CD4-positive, alpha-beta T cell (primary cell): ENCODE measurements at regions of chr5 and their contacts with region 1.

Region 1: DNA sequence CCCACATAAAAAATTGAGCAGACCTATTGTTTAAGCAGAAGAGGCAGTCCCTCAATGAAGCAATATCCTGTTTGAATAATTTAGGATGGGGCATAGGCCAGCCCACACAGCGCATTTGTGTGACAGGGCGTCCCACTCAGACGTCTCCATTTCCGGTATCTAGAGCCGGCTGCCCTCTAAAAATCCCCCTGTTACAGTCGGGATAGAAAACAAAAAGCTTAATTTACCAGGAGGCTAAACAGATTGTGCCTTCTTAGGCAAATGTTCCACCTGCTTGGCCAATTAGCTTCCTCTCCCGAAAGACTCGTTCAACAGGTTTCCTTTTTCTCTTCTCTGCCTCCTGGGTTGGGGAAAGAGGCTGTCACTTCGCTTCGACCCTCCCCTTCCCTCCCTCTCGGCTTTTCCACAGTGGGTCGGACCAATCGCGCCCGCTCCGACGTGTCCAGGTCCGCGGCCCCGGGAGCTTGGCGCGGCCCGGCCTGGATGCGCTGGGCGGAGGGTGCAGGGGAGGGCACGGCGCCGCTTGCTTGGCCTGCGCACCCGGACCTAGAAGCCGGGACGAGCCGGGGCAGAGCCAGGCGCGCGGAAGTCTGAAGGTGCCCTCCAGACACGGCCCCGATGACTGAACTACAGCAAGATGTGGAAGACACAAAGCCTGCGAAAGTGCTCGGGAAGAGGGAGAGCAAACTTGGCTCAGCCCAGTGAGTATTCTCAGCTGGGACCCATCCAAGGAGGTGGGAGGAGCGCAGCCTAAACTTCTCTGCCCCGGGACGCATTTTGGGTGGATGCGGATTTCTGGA is at the start of gene GRAMD2B:
- DNase-seq: peak; percentile 38 to 88 (median 57)
- ATAC-seq: peak; percentile 95
- H3K4me3 ChIP-seq: peak within 1 kb of the TSS; percentile 72
- H3K4me3 Mint-ChIP-seq: peak within 1 kb of the TSS; percentile 99
- H3K27ac ChIP-seq: peak within 1 kb of the TSS; percentile 81 to 82
- H3K27ac Mint-ChIP-seq: peak within 1 kb of the TSS; percentile 93
- H3K4me1 ChIP-seq: peaks cover 10% of the 10 kb centered on the region
- H3K4me1 Mint-ChIP-seq: peaks cover 48% of the 10 kb centered on the region
- H3K27me3 ChIP-seq: no peaks in the 10 kb centered on the region
- H3K27me3 Mint-ChIP-seq: no peaks in the 10 kb centered on the region
- CTCF ChIP-seq: no peak
- total RNA-seq, gene GRAMD2B: 7.2 to 9.4 TPM

Region 2: DNA sequence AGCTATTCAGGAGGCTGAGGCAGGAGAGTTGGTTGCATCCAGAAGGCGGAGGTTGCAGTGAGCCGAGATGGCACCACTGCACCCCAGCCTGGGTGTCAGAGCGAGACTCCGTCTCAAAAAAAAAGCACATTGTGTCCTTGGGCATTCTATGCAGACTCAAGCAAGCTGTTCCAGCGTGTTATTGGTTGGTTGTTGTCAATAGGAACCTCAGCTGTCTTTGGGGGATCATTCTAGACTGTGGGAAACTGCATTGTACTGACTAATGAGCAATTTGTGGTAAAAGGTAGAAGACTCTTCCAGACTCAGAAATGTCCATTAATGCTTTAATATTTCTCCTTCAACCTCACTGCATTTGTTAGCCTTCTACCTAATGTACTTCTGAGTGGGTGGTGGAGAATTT is 379.5 kb before region 1 on chr5:
- CTCF ChIA-PET with region 1: no interaction called
- POLR2A ChIA-PET with region 1: no interaction called
- intact Hi-C with region 1: no loop called
- DNase-seq: no peak
- ATAC-seq: no peak
- H3K4me3 ChIP-seq: no peak overlapping the region
- H3K4me3 Mint-ChIP-seq: no peak overlapping the region
- H3K27ac ChIP-seq: no peak overlapping the region
- H3K27ac Mint-ChIP-seq: no peak overlapping the region
- H3K4me1 ChIP-seq: no peaks in the 10 kb centered on the region
- H3K4me1 Mint-ChIP-seq: no peaks in the 10 kb centered on the region
- H3K27me3 ChIP-seq: no peaks in the 10 kb centered on the region
- H3K27me3 Mint-ChIP-seq: no peaks in the 10 kb centered on the region
- CTCF ChIP-seq: no peak

Region 3: DNA sequence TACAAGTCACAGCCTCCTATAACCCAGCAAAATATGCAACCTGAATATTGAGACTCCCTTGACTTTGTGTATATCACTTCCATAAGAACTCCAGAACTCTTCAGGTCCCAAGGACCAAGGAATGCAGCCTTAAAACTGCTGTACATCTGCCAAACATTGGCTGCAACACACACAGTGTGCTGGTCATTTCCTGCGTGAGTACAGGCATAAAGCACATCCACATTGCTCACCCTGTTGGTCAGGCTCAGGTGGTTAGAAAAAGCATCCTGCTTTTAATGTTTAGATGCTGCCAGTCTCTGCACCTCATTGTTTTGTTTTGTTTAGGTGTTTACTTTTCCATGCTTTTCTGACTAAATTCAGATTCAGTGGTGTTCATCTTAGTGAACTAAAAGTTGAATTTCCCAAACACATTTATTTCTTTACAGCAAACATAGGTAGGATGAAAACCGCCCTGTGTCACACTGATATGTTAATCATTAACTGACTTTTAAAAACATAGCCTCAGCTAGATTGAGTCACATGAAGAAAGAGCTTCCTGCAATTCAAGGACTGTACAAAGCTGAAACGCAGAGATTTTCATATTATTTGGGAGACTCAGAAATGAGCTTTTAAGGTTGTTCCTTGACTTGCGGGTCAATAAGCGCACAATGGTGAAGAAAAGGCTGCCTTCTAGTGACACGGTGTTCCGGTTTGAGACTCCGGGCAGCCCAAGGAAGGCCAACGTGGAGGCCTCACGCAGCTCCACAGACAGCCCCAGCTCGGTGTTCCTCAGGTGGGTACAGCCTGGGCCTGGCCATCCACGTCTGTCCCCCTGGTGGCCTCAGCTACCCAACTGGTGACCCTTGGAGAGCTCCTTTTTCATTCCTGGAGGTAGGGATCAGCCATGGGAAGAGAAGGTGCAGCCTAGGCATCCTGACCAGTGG is 52.1 kb before region 1 on chr5:
- CTCF ChIA-PET with region 1: no interaction called
- POLR2A ChIA-PET with region 1: no interaction called
- intact Hi-C with region 1: loop called in 1 of 2 experiments (anchors 10 kb)
- DNase-seq: no peak
- ATAC-seq: no peak
- H3K4me3 ChIP-seq: no peak overlapping the region
- H3K4me3 Mint-ChIP-seq: no peak overlapping the region
- H3K27ac ChIP-seq: no peak overlapping the region
- H3K27ac Mint-ChIP-seq: no peak overlapping the region
- H3K4me1 ChIP-seq: peaks cover 6% of the 10 kb centered on the region
- H3K4me1 Mint-ChIP-seq: peaks cover 17% of the 10 kb centered on the region
- H3K27me3 ChIP-seq: no peaks in the 10 kb centered on the region
- H3K27me3 Mint-ChIP-seq: no peaks in the 10 kb centered on the region
- CTCF ChIP-seq: no peak

Region 4: DNA sequence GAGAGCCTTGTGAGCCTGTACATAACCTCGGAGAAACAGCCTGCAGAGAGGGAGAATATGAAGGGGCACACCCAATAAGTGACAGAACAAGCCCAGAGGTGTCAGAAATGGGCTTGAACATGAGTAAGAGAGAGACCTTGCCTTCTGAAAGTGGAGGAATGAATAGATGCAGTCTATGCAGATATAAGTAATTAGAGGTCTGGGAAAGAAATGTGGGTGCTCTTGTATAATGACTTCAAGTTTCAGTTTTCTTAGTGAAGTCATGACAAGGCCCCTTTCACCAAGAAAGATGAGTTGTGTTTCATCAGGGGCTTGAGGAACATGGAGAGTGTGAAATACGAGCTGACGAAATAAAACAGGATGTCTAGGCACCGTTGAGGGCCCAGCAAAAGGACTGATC is 15.1 kb after region 1 on chr5:
- CTCF ChIA-PET with region 1: no interaction called
- POLR2A ChIA-PET with region 1: interaction called, 17 read pairs
- intact Hi-C with region 1: no loop called
- DNase-seq: peak in 1 of 14 experiments; percentile 28
- ATAC-seq: no peak
- H3K4me3 ChIP-seq: no peak overlapping the region
- H3K4me3 Mint-ChIP-seq: no peak overlapping the region
- H3K27ac ChIP-seq: no peak overlapping the region
- H3K27ac Mint-ChIP-seq: no peak overlapping the region
- H3K4me1 ChIP-seq: peaks cover under 1% of the 10 kb centered on the region
- H3K4me1 Mint-ChIP-seq: peaks cover 11% of the 10 kb centered on the region
- H3K27me3 ChIP-seq: no peaks in the 10 kb centered on the region
- H3K27me3 Mint-ChIP-seq: no peaks in the 10 kb centered on the region
- CTCF ChIP-seq: no peak

Region 5: GRCh38 chr5:126449751-126450271 is 26.6 kb after region 1 on chr5:
- CTCF ChIA-PET with region 1: interaction called, 3 read pairs
- POLR2A ChIA-PET with region 1: interaction called, 72 read pairs
- intact Hi-C with region 1: loop called (anchors 1 to 2 kb)
- DNase-seq: peak in 13 of 14 experiments; percentile 20 to 90 (median 53)
- ATAC-seq: peak; percentile 77
- H3K4me3 ChIP-seq: peak overlapping the region; percentile 57
- H3K4me3 Mint-ChIP-seq: peak overlapping the region; percentile 91
- H3K27ac ChIP-seq: peak overlapping the region; percentile 84 to 96
- H3K27ac Mint-ChIP-seq: peak overlapping the region; percentile 97
- H3K4me1 ChIP-seq: peaks cover 53% of the 10 kb centered on the region
- H3K4me1 Mint-ChIP-seq: peaks cover 71% of the 10 kb centered on the region
- H3K27me3 ChIP-seq: no peaks in the 10 kb centered on the region
- H3K27me3 Mint-ChIP-seq: no peaks in the 10 kb centered on the region
- CTCF ChIP-seq: no peak

Region 6: GRCh38 chr5:126462239-126463014 is 39.2 kb after region 1 on chr5:
- CTCF ChIA-PET with region 1: no interaction called
- POLR2A ChIA-PET with region 1: interaction called, 9 read pairs
- intact Hi-C with region 1: loop called in 1 of 2 experiments (anchors 5 kb)
- DNase-seq: no peak
- ATAC-seq: no peak
- H3K4me3 ChIP-seq: no peak overlapping the region
- H3K4me3 Mint-ChIP-seq: no peak overlapping the region
- H3K27ac ChIP-seq: no peak overlapping the region
- H3K27ac Mint-ChIP-seq: peak overlapping the region; percentile 35
- H3K4me1 ChIP-seq: no peaks in the 10 kb centered on the region
- H3K4me1 Mint-ChIP-seq: peaks cover 28% of the 10 kb centered on the region
- H3K27me3 ChIP-seq: no peaks in the 10 kb centered on the region
- H3K27me3 Mint-ChIP-seq: no peaks in the 10 kb centered on the region
- CTCF ChIP-seq: no peak

Region 7: DNA sequence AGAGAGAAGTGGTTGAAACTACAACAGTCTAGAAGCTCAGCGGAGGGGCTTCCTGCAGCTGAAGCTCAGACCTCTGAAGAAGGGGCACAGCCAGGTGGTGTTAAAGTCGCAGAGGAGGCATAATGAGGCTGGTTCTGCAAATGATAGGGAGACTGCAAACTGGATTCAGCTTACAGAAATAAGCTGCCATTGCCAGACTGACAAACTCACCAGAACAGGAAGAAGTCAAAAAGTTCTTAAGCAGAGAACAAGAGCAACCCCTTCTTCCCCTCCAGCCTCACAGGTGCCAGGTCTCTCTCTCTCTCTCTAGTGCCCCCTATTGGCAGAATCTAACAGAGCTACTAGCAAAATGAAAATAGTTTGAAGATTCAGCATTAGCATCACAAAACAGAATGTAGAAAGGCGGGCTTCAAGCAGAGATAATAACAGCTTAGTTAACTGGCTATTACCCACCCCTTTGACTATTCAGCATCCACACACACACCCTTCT is 76.7 kb after region 1 on chr5:
- CTCF ChIA-PET with region 1: no interaction called
- POLR2A ChIA-PET with region 1: interaction called, 14 read pairs
- intact Hi-C with region 1: loop called (anchors 2 to 5 kb)
- DNase-seq: peak in 8 of 14 experiments; percentile 8 to 77 (median 36)
- ATAC-seq: peak; percentile 79
- H3K4me3 ChIP-seq: no peak overlapping the region
- H3K4me3 Mint-ChIP-seq: peak overlapping the region; percentile 11
- H3K27ac ChIP-seq: no peak overlapping the region
- H3K27ac Mint-ChIP-seq: peak overlapping the region; percentile 82
- H3K4me1 ChIP-seq: peaks cover 10% of the 10 kb centered on the region
- H3K4me1 Mint-ChIP-seq: peaks cover 45% of the 10 kb centered on the region
- H3K27me3 ChIP-seq: no peaks in the 10 kb centered on the region
- H3K27me3 Mint-ChIP-seq: no peaks in the 10 kb centered on the region
- CTCF ChIP-seq: peak; percentile 68

Region 8: GRCh38 chr5:126508962-126509279 is 85.7 kb after region 1 on chr5:
- CTCF ChIA-PET with region 1: no interaction called
- POLR2A ChIA-PET with region 1: interaction called, 11 read pairs
- intact Hi-C with region 1: no loop called
- DNase-seq: peak in 4 of 14 experiments; percentile 28 to 64 (median 55)
- ATAC-seq: peak; percentile 90
- H3K4me3 ChIP-seq: peak overlapping the region; percentile 29
- H3K4me3 Mint-ChIP-seq: peak overlapping the region; percentile 85
- H3K27ac ChIP-seq: peak overlapping the region in 1 of 2 donors; percentile 11
- H3K27ac Mint-ChIP-seq: peak overlapping the region; percentile 92
- H3K4me1 ChIP-seq: peaks cover 23% of the 10 kb centered on the region
- H3K4me1 Mint-ChIP-seq: peaks cover 50% of the 10 kb centered on the region
- H3K27me3 ChIP-seq: no peaks in the 10 kb centered on the region
- H3K27me3 Mint-ChIP-seq: no peaks in the 10 kb centered on the region
- CTCF ChIP-seq: no peak